ENCODE measurements at regions of chr2 and their contacts with region 1.

Region 1: GRCh38 chr2:128494640-128495321 is 176.1 kb upstream of the HS6ST1 start:
- DNase-seq: peak in 1 of 3 donors; percentile 28
- ATAC-seq: peak; percentile 90 to 91
- H3K4me3 ChIP-seq: no peak overlapping the region
- H3K27ac ChIP-seq: peak overlapping the region; percentile 37
- H3K4me1 ChIP-seq: peaks cover 6% of the 10 kb centered on the region
- H3K27me3 ChIP-seq: no peaks in the 10 kb centered on the region

Region 2: DNA sequence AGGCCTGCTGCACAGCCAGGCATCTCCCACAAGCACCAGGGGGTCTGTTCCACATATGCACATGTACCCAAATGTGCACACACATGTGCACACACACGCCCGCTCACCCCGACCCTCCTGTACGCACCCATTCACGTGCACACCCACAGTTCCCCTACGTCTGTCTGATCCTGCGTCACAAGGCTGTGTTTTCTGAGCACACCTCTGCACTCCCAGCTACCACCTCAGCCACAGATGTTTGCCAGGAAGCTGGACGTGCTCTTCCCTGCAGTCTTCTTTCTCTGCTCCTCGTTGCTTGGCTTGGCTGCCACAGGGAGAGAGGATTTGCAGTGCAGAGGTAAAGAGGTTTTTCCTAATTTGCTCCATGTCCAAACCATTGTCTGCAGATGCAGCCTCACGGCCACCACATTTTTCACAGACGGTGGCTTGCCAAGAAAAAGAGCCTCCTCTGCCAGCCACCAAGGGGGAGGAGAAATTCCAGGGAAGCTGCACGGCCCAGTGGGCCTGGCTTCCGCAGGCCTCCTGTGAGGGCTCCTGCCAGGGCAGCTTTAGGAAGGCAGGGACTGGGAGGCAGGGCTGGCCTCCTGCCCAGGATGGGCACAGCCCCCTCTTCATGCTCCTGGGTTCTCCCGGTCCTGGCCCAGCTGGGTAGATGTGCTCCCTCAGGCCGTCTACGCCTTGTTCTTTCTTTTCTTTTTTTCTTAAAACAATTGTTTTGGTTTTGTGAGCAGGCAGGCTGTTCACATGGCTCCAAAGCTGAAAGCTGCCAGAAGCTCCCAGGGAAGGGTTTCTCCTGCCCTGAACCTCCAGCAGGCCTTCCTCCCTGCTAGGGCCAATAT is 146.9 kb before region 1 on chr2:
- intact Hi-C with region 1: loop called in 1 of 4 experiments (anchors 10 kb)
- DNase-seq: peak; percentile 76 to 92 (median 91)
- ATAC-seq: peak; percentile 95 to 97
- H3K4me3 ChIP-seq: no peak overlapping the region
- H3K27ac ChIP-seq: no peak overlapping the region
- H3K4me1 ChIP-seq: peaks cover 4% of the 10 kb centered on the region
- H3K27me3 ChIP-seq: no peaks in the 10 kb centered on the region

Measured in right cardiac atrium (tissue), 5 donors.